Breast epithelium (tissue), 4 donors: ENCODE measurements at regions of chr2 and their contacts with region 1.

Region 1: GRCh38 chr2:218953481-218953881 is 6.0 kb upstream of the CDK5R2 start:
- DNase-seq: no peak
- H3K4me3 ChIP-seq: no peak overlapping the region
- H3K27ac ChIP-seq: no peak overlapping the region
- H3K4me1 ChIP-seq: no peaks in the 10 kb centered on the region
- H3K27me3 ChIP-seq: peaks cover 0 to 28% of the 10 kb centered on the region in 2 donors
- CTCF ChIP-seq: no peak
- POLR2A ChIP-seq: no peak

Region 2: GRCh38 chr2:218924757-218925156 is 28.7 kb before region 1 on chr2:
- intact Hi-C with region 1: loop called (anchors 2 kb)
- DNase-seq: no peak
- H3K4me3 ChIP-seq: no peak overlapping the region
- H3K27ac ChIP-seq: no peak overlapping the region
- H3K4me1 ChIP-seq: no peaks in the 10 kb centered on the region
- H3K27me3 ChIP-seq: peaks cover 0 to 2% of the 10 kb centered on the region in 2 donors
- CTCF ChIP-seq: no peak
- POLR2A ChIP-seq: no peak